ENCODE measurements at regions of chr11 and their contacts with region 1.

Region 1: GRCh38 chr11:32052218-32052617 is 38.7 kb upstream of the RCN1 start:
- DNase-seq: peak; percentile 93
- H3K4me3 ChIP-seq: no peak overlapping the region
- H3K27ac ChIP-seq: no peak overlapping the region
- H3K4me1 ChIP-seq: peaks cover 4% of the 10 kb centered on the region
- H3K27me3 ChIP-seq: peaks cover 49% of the 10 kb centered on the region
- CTCF ChIP-seq: peak; percentile 100

Region 2: DNA sequence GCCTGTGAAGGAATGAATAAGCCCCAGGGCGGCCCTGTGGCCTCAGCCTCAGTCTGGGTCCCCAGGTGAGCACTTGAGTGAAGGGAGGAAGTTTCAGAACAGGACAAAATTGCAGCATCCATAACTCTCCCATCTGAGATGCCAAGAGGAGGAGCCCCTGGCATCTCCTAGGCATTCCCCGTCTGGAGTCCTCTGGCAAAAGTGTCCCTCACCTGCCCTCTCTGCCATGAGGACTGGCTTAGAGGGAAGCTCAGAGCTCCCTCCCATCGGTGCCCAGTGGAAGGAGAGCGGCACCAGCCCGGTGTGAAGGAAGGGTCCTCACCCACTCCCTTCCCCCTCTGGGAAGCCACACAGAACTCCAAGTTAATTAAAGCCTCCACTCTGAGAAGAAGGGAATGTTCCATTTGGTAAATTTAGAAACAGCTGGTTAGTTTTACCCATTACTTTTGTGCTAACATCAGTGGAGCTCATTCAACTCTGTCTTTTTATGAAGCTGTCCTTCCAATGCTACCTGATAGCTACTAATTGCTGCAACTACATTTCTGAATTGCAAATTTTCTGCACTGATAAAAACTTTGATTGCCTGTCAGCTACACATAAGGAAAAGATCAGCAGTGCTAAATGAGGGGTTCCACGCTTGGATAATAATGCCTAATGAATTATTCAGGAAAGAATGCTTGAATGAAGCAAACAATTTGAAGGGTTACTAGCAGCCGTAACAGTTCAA is 84.7 kb before region 1 on chr11:
- CTCF ChIA-PET with region 1: no interaction called
- POLR2A ChIA-PET with region 1: no interaction called
- intact Hi-C with region 1: no loop called
- DNase-seq: peak; percentile 59
- H3K4me3 ChIP-seq: no peak overlapping the region
- H3K27ac ChIP-seq: no peak overlapping the region
- H3K4me1 ChIP-seq: peaks cover 15% of the 10 kb centered on the region
- H3K27me3 ChIP-seq: peaks cover 41% of the 10 kb centered on the region
- CTCF ChIP-seq: no peak

Region 3: GRCh38 chr11:32029721-32030120 is 22.5 kb before region 1 on chr11:
- CTCF ChIA-PET with region 1: interaction called, 15 read pairs
- POLR2A ChIA-PET with region 1: no interaction called
- intact Hi-C with region 1: no loop called
- DNase-seq: peak; percentile 63
- H3K4me3 ChIP-seq: no peak overlapping the region
- H3K27ac ChIP-seq: no peak overlapping the region
- H3K4me1 ChIP-seq: peaks cover 13% of the 10 kb centered on the region
- H3K27me3 ChIP-seq: peaks cover 58% of the 10 kb centered on the region
- CTCF ChIP-seq: no peak

Region 4: DNA sequence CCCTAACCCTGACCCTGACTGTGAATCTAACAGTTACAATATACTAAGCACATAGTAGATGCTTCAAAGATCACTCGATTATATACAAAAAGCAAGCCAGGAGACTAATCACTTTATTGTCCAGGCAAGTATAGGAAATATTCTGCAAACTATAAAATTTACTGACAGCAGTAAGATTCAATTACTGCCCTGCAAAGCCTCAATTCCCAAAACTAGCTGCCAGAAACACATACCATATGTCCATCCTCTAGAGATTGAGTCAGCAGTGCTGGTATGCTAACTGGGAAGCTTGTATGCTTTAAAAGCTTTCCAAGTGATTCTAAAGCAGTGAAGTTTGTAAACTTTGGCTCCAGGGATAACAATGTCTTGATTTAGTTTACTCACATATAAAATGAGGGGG is 1083.0 kb after region 1 on chr11:
- CTCF ChIA-PET with region 1: no interaction called
- POLR2A ChIA-PET with region 1: no interaction called
- intact Hi-C with region 1: no loop called
- DNase-seq: peak; percentile 77
- H3K4me3 ChIP-seq: no peak overlapping the region
- H3K27ac ChIP-seq: peak overlapping the region; percentile 13
- H3K4me1 ChIP-seq: peaks cover 36% of the 10 kb centered on the region
- H3K27me3 ChIP-seq: no peaks in the 10 kb centered on the region
- CTCF ChIP-seq: no peak

Measured in A673 (cell line).